ENCODE measurements at regions of chr7 and their contacts with region 1.

Region 1: DNA sequence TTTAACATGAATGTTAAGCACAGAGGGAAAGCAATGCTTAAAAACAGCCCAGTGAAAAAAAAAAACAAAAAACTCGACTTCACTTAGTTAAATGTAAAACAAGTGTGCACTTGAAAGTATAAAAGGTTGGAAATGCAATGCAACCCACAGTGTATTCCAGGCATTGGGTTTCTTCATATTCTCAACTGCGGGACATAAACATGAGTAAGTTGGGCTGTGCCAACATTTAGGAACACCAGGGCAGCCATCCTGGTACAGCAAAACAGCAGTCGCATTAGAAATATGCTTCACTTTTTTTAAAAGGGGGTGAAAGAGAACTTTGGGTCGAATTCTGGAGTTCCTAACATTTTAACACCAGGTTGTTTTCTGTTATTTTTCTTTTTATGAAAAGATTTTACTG is 937 bp downstream of the STEAP1 start:
- DNase-seq: no peak
- H3K4me3 ChIP-seq: no peak overlapping the region
- H3K27ac ChIP-seq: peak overlapping the region in 2 of 4 donors; percentile 10 to 73
- H3K4me1 ChIP-seq: peaks cover 0 to 13% (median 5%) of the 10 kb centered on the region in 4 donors
- H3K27me3 ChIP-seq: no peaks in the 10 kb centered on the region
- CTCF ChIP-seq: no peak
- EP300 ChIP-seq: no peak
- POLR2A ChIP-seq: no peak

Region 2: GRCh38 chr7:90092467-90092866 is 62.7 kb before region 1 on chr7:
- in situ Hi-C with region 1: no loop called
- intact Hi-C with region 1: no loop called
- DNase-seq: no peak
- H3K4me3 ChIP-seq: no peak overlapping the region
- H3K27ac ChIP-seq: no peak overlapping the region
- H3K4me1 ChIP-seq: no peaks in the 10 kb centered on the region
- H3K27me3 ChIP-seq: no peaks in the 10 kb centered on the region
- CTCF ChIP-seq: no peak
- EP300 ChIP-seq: no peak
- POLR2A ChIP-seq: no peak

Region 3: DNA sequence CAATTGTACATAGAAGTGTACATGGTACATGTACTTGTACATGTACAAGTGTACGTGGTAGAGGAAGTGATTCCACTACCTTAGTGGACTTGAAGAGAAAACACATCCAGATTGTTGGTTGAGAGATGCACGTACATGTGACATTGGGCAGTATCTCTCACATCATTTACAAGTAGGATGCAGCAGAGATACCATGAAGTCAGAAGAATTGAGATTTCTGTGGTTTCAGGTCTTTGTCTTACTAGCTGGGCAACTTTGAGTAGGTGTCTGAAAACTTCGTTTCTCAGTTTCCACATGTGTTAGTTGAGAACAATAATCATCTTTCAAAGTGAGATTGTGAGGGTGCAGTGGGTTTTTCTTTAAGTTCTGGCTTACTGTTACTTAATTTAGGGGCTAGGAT is 269.5 kb after region 1 on chr7:
- in situ Hi-C with region 1: loop called in 3 of 4 experiments (anchors 10 to 25 kb)
- intact Hi-C with region 1: loop called (anchors 2 kb)
- DNase-seq: no peak
- H3K4me3 ChIP-seq: no peak overlapping the region
- H3K27ac ChIP-seq: no peak overlapping the region
- H3K4me1 ChIP-seq: no peaks in the 10 kb centered on the region
- H3K27me3 ChIP-seq: no peaks in the 10 kb centered on the region
- CTCF ChIP-seq: no peak
- EP300 ChIP-seq: no peak
- POLR2A ChIP-seq: no peak

Region 4: DNA sequence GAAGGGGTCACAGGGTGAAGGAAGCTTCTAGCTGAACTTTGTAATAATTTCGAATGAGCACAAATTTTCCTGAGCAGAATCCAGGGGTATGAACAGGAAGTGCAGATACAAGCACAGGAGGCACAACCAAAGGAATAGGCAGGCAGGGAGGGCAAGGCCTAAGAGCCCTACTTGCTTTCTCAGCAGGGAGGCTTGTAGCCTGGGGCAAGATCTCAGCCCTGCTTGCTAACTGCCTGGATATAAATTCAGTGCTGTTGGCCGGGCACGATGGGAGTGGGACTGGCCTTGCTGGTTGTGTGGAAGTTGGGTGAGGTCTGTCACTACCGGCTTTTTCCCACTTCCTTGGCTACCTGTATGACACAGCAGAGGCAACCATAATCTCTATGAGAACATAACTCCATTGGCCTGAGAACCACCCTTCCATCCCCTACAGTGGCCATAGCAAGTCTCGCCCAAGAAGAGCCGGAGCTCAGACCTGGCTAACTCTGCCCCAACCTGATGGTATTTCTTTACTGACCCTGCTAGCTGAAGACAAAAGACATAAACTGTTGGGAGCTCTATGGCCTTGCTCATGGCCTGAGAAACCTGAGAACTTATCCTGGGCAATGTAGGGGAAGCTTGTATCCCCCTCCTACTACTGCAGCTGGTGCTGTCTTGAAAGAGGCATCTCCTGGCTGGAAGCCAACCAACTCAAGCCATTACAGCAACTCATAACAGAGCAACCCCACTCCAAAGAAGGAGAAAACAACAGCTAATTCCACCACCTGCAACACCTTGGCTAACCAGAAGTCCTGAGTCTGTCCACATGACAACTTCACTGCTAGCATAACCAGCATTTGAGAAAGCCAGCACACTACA is 275.6 kb after region 1 on chr7:
- in situ Hi-C with region 1: loop called in 2 of 4 experiments (anchors 10 kb)
- intact Hi-C with region 1: loop called (anchors 2 kb)
- DNase-seq: no peak
- H3K4me3 ChIP-seq: no peak overlapping the region
- H3K27ac ChIP-seq: no peak overlapping the region
- H3K4me1 ChIP-seq: no peaks in the 10 kb centered on the region
- H3K27me3 ChIP-seq: no peaks in the 10 kb centered on the region
- CTCF ChIP-seq: no peak
- EP300 ChIP-seq: no peak
- POLR2A ChIP-seq: no peak

Region 5: GRCh38 chr7:90900628-90901356 is 745.6 kb after region 1 on chr7:
- in situ Hi-C with region 1: no loop called
- intact Hi-C with region 1: no loop called
- DNase-seq: no peak
- H3K4me3 ChIP-seq: no peak overlapping the region
- H3K27ac ChIP-seq: no peak overlapping the region
- H3K4me1 ChIP-seq: no peaks in the 10 kb centered on the region
- H3K27me3 ChIP-seq: no peaks in the 10 kb centered on the region
- CTCF ChIP-seq: no peak
- EP300 ChIP-seq: no peak
- POLR2A ChIP-seq: no peak

Measured in transverse colon (tissue), 4 donors.